PC-9 (cell line): ENCODE measurements at regions of chr19 and their contacts with region 1.

Region 1: DNA sequence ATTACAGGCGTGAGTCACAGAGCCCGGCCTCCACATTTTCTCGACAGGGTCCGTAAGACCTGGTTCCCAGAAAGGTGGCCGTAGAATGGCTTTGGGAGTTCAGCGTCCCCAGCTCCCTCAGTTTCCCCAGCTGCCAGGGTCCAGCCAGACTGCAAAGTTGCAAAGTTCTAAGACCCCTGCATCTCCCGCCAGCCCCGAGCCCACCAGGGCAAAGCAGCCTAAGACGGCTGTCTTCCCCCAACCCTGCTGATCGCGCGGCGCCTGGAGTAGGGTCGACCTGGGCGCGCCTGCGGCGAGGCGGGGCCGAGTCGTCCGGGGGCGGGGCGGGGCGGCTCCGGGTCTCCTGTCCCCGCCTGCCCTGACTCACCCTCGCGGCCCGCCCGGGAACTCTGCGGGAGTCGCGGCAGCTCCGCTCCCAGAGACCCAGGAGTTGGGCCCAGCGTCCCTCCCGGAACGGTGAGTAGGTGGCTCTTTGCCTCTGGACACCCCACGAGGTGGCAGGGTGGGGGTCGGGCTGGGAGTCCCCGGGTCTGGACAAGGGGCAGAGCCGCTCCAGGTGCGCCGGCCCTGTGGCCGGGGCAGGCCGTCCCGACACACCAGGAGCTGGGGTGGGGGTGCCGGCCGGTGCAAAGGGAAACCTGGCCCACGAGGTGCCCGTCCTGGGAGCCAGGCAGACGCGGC is at the start of gene LRRC8E:
- DNase-seq: peak; percentile 61 to 86
- H3K4me3 ChIP-seq: peak within 1 kb of the TSS; percentile 87
- H3K27ac ChIP-seq: 0 out of 2 replicates have a peak within 1 kb of the TSS, but pooled peaks have one; percentile 5
- H3K4me1 ChIP-seq: peaks cover 26% of the 10 kb centered on the region
- H3K27me3 ChIP-seq: no peaks in the 10 kb centered on the region
- CTCF ChIP-seq: no peak
- total RNA-seq, gene LRRC8E: 24.1 and 24.4 TPM in 2 replicates

Region 2: DNA sequence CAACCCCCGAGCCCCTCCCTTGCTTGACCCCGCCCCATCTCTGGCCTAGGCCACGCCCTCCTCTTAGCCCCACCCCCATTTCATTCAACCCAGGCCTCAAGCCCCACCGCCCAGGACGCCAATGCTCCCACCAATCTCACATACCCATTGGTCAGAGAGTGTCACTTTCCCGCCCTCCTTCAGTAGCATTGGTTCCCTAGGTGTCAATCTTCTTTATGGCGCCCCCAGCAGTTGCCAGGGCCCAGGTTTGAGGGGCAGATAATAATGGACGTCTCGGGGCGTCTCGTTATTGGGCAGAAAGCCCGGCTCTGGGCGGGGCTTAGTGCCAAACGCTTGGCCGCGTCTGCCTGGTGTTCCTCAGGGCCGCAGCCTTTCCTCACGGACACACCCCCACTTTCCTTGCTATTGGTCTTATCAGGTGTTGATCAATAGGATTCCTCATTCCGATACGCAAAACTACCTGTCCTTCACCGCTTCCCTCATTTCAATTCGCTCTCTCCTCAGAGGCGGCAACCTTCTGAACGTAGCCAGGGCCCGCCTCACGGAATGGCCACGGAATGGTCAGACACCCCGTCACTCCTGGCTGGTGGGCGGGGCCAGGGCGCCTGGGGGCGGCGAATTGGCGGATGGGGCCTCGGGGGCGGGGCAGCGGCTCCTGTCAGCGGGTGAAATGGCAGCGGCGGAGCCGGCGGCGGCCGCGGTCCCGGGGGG is 58.6 kb before region 1 on chr19 and contains the start of gene EVI5L:
- CTCF ChIA-PET with region 1: no interaction called
- POLR2A ChIA-PET with region 1: no interaction called
- intact Hi-C with region 1: no loop called
- DNase-seq: peak; percentile 98 to 100
- H3K4me3 ChIP-seq: peak within 1 kb of the TSS; percentile 56; the same call in 1 of the 2 replicates
- H3K27ac ChIP-seq: no peak within 1 kb of the TSS
- H3K4me1 ChIP-seq: peaks cover 22% of the 10 kb centered on the region
- H3K27me3 ChIP-seq: peaks cover 13% of the 10 kb centered on the region; the same call in 1 of the 2 replicates
- CTCF ChIP-seq: no peak; the same call in 1 of the 2 replicates
- total RNA-seq, gene EVI5L: 13.1 and 19.2 TPM in 2 replicates

Region 3: DNA sequence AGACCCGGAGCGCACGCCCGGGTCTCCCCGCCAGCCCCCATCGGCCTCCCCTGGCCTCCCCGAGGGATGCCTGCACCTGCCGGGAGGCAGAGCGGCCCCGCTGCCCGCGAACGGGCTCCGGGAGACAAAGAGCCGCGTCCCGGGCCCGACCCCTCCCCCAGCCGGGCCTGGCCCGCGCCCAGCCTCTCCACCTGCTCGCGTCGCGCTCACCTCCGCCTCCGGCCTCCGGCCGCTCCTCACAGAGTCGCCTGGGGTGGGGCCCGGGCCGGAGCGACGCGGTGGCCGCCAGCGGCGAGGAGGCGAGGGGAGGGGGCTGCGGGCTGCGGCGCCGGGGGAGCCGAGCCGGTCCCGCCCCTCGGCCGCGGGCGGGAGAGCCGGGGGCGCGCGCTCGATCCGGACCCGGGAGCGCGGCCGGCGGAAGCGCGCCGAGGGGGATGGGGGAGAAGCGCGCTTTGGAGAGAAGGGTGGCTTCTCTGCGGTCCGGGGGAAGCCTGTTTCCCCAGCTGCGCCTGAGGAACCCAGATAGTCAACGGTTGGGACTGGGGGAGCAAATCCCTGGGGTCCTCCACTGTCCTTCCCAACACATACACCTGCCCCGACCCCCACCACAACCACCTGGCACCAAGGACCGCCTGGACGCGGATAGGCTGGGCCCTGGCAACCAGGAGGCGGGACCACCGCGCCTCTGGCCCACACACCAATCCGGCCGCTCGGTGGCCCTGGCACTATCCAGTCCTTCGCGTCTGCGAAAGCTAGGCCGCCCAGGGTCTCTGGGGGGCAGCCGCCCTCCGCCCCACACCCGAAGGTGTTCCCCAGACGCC is 14.0 kb before region 1 on chr19 and contains the start of gene PRR36:
- CTCF ChIA-PET with region 1: interaction called, 10 read pairs
- POLR2A ChIA-PET with region 1: no interaction called
- intact Hi-C with region 1: loop called (anchors 2 kb)
- DNase-seq: peak; percentile 55 to 76
- H3K4me3 ChIP-seq: peak within 1 kb of the TSS; percentile 71
- H3K27ac ChIP-seq: no peak within 1 kb of the TSS
- H3K4me1 ChIP-seq: peaks cover 20% of the 10 kb centered on the region
- H3K27me3 ChIP-seq: no peaks in the 10 kb centered on the region
- CTCF ChIP-seq: no peak
- total RNA-seq, gene PRR36: 12.9 and 20.3 TPM in 2 replicates

Region 4: GRCh38 chr19:7914598-7915045 is 26.3 kb after region 1 on chr19 and contains the start of gene TGFBR3L:
- CTCF ChIA-PET with region 1: no interaction called
- POLR2A ChIA-PET with region 1: no interaction called
- intact Hi-C with region 1: no loop called
- DNase-seq: no peak
- H3K4me3 ChIP-seq: no peak within 1 kb of the TSS
- H3K27ac ChIP-seq: no peak within 1 kb of the TSS
- H3K4me1 ChIP-seq: peaks cover 10% of the 10 kb centered on the region
- H3K27me3 ChIP-seq: peaks cover 19% of the 10 kb centered on the region
- CTCF ChIP-seq: no peak
- total RNA-seq, gene TGFBR3L: 2.0 and 2.3 TPM in 2 replicates